Panc1 (cell line): ENCODE measurements at regions of chr16 and their contacts with region 1.

Region 1: DNA sequence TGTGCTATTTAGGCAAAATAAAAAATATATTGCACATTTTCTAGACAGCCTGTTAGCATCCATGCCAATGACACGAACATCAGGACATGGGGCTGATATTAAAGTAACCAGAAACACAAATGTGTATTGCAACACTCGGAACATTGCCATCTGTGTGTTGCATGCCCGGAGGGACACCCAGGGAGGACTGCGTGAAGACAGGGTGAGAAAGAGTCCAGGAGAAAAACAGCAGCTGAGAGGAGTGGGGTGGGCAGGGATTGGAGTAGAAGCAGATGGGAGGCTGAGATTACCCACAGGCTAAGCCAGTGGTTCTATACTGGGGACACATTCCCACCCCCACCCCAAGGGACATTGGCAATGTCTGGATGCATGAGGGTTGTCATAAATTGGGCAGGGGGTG is 114.8 kb downstream of the GRIN2A start:
- DNase-seq: no peak
- ATAC-seq: no peak
- H3K4me3 ChIP-seq: no peak overlapping the region
- H3K27ac ChIP-seq: no peak overlapping the region
- H3K4me1 ChIP-seq: no peaks in the 10 kb centered on the region
- H3K27me3 ChIP-seq: no peaks in the 10 kb centered on the region
- CTCF ChIP-seq: no peak

Region 2: GRCh38 chr16:9231039-9231438 is 836.4 kb before region 1 on chr16:
- CTCF ChIA-PET with region 1: no interaction called
- POLR2A ChIA-PET with region 1: interaction called, 13 read pairs
- in situ Hi-C with region 1: no loop called
- intact Hi-C with region 1: no loop called
- DNase-seq: no peak
- ATAC-seq: no peak
- H3K4me3 ChIP-seq: no peak overlapping the region
- H3K27ac ChIP-seq: no peak overlapping the region
- H3K4me1 ChIP-seq: no peaks in the 10 kb centered on the region
- H3K27me3 ChIP-seq: peaks cover 8% of the 10 kb centered on the region
- CTCF ChIP-seq: no peak